Mammary epithelial cell (primary cell): ENCODE measurements at regions of chr2 and their contacts with region 1.

Region 1: DNA sequence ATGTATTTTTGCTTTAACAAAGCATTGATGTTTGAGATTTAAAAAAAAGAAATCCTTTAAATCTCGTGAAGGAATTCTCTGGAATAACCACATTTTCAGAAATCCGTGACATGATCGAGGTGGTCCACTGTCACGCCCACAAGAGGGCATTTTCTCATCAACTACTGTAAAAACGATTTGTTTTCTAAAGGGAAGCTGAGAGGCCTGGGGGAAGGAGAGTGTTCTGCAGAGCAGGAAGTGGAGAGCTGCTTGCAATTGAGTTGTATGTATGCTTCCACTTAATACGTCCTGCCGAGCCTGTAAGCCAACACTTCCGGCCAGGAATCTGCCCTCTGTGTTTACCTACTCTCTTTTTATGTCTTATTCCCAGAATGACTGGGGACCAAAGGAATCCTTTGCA is 19.4 kb downstream of the KLHL29 start:
- DNase-seq: peak; percentile 40
- H3K4me3 ChIP-seq: no peak overlapping the region
- H3K27ac ChIP-seq: no peak overlapping the region
- H3K4me1 ChIP-seq: peaks cover 19% of the 10 kb centered on the region
- H3K27me3 ChIP-seq: no peaks in the 10 kb centered on the region
- CTCF ChIP-seq: peak in 1 of 2 donors; percentile 12

Region 2: DNA sequence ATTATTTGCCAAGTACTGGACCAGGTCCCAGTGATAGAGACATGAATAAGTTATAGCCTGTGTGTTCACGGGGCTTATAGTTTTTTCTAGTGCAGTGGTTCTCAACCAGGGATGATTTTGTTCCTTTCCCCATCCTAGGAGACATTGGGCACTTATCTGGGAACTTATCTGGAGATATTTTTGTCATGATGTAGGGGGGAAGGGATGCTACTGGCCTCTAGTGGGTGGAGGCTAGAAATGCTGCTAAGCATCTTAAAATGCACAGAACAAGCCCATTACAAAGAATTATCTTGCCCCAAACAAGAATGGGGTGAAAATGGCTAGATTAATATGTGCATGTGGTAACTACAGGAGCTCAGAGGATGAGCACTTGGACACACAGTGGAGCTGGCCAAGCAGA is 55.8 kb after region 1 on chr2:
- CTCF ChIA-PET with region 1: no interaction called
- dilution Hi-C with region 1: no loop called
- in situ Hi-C with region 1: no loop called
- intact Hi-C with region 1: loop called (anchors 5 kb)
- DNase-seq: no peak
- H3K4me3 ChIP-seq: no peak overlapping the region
- H3K27ac ChIP-seq: no peak overlapping the region
- H3K4me1 ChIP-seq: peaks cover 3% of the 10 kb centered on the region
- H3K27me3 ChIP-seq: no peaks in the 10 kb centered on the region
- CTCF ChIP-seq: peak; percentile 67

Region 3: GRCh38 chr2:23563673-23564619 is 159.5 kb after region 1 on chr2:
- CTCF ChIA-PET with region 1: no interaction called
- dilution Hi-C with region 1: no loop called
- in situ Hi-C with region 1: no loop called
- intact Hi-C with region 1: loop called (anchors 5 kb)
- DNase-seq: peak; percentile 80
- H3K4me3 ChIP-seq: no peak overlapping the region
- H3K27ac ChIP-seq: no peak overlapping the region
- H3K4me1 ChIP-seq: peaks cover 29% of the 10 kb centered on the region
- H3K27me3 ChIP-seq: no peaks in the 10 kb centered on the region
- CTCF ChIP-seq: peak; percentile 5 to 41

Region 4: GRCh38 chr2:23801396-23801795 is 397.0 kb after region 1 on chr2:
- CTCF ChIA-PET with region 1: interaction called, 16 read pairs
- dilution Hi-C with region 1: no loop called
- in situ Hi-C with region 1: no loop called
- intact Hi-C with region 1: no loop called
- DNase-seq: peak; percentile 46
- H3K4me3 ChIP-seq: no peak overlapping the region
- H3K27ac ChIP-seq: peak overlapping the region; percentile 27
- H3K4me1 ChIP-seq: peaks cover 37% of the 10 kb centered on the region
- H3K27me3 ChIP-seq: no peaks in the 10 kb centered on the region
- CTCF ChIP-seq: no peak

Region 5: GRCh38 chr2:24164125-24164973 is 759.9 kb after region 1 on chr2:
- CTCF ChIA-PET with region 1: no interaction called
- dilution Hi-C with region 1: no loop called
- in situ Hi-C with region 1: no loop called
- intact Hi-C with region 1: no loop called
- DNase-seq: no peak
- H3K4me3 ChIP-seq: no peak overlapping the region
- H3K27ac ChIP-seq: no peak overlapping the region
- H3K4me1 ChIP-seq: no peaks in the 10 kb centered on the region
- H3K27me3 ChIP-seq: no peaks in the 10 kb centered on the region
- CTCF ChIP-seq: peak; percentile 49 to 69